ENCODE measurements at regions of chr5 and their contacts with region 1.

Region 1: DNA sequence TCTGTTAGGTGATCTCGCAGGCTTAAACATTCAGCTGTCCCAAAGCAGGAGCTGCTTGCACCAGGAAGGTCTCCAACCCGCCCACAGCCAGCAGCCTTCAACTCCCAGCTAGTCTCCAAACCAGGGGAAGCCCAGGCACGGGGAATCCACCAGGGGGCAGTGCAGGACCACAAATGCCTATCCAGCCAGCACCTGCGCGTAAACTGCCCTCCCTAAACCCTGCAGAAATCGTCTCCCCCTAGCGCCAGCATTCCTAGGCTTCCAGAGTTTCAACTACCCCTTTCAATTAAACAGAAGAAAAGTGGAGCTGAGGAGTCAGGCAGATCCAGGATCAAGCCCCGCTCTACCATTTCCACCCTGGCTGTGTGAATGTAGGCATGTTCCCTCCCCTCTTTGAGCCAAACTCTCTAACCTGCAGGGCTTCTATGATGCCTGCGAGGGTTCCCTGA is 72.0 kb downstream of the HRH2 start:
- DNase-seq: peak; percentile 74
- H3K4me3 ChIP-seq: no peak overlapping the region
- H3K27ac ChIP-seq: no peak overlapping the region
- H3K4me1 ChIP-seq: no peaks in the 10 kb centered on the region
- H3K27me3 ChIP-seq: no peaks in the 10 kb centered on the region
- CTCF ChIP-seq: peak; percentile 94 to 97

Region 2: DNA sequence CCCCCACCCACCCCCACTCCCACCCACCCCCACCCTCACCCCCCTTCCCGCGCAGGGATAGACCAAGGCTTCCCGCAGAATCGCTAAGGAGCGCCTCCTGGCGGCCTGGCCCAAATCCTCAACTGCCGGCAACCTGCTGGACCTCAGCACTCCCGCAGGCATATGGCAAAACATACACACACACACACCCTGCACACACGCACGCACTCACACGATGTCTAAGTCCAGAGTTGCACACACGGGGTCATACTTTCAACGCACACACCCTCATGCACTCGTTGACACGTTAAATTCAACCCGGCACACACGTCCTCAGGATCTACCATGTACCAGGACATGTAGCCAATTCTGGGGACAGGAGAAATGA is 143.2 kb after region 1 on chr5:
- CTCF ChIA-PET with region 1: no interaction called
- dilution Hi-C with region 1: no loop called
- in situ Hi-C with region 1: loop called in 1 of 2 experiments (anchors 25 kb)
- intact Hi-C with region 1: loop called (anchors 10 kb)
- DNase-seq: no peak
- H3K4me3 ChIP-seq: no peak overlapping the region
- H3K27ac ChIP-seq: no peak overlapping the region
- H3K4me1 ChIP-seq: no peaks in the 10 kb centered on the region
- H3K27me3 ChIP-seq: peaks cover 14% of the 10 kb centered on the region
- CTCF ChIP-seq: peak in 1 of 2 donors; percentile 31

Region 3: DNA sequence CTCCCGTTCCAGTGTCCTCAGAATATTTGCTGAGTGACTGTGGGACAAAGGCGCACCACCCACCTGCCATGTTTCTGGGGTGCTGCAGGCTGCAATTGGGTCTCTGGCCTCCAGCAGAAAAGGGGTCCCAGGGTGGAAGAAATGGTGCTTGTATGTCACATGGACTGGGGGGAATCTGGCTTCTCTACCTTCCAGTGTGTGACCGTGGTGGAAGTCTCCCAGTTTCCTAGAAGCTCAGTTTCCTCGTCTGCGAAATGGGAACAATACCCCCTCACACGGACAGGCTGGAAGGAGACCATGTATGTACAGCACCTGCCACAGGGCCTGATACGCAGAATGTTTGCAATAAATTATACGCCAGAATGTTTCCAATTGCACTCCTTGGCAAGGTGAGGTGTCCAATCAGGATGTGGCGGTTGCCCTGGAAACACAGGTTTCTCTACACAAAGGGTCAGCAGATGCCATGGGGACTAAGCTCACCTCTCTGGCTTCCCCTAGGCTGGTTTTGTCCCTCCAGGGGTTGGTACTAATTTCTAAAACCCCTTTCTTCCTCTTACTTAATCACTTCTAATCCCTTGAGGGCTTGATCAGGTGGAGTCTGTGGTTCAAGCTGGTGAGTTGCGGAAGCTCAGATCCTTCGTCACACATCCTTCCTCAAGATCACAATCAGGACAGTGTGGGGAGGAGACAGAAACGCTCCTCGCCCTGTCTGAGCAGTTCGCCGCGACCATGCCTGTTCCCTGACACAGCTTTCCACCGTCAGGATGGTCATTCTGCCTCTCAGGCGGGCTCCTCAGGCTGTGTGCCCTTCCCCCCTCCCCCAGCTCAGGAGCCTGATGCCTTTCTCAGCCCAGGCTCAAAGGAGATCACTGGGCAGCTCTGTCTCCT is 165.6 kb after region 1 on chr5:
- CTCF ChIA-PET with region 1: no interaction called
- dilution Hi-C with region 1: no loop called
- in situ Hi-C with region 1: loop called in 1 of 2 experiments (anchors 25 kb)
- intact Hi-C with region 1: no loop called
- DNase-seq: peak; percentile 83
- H3K4me3 ChIP-seq: no peak overlapping the region
- H3K27ac ChIP-seq: no peak overlapping the region
- H3K4me1 ChIP-seq: peaks cover 9% of the 10 kb centered on the region
- H3K27me3 ChIP-seq: no peaks in the 10 kb centered on the region
- CTCF ChIP-seq: no peak

Region 4: GRCh38 chr5:175902026-175902425 is 172.2 kb after region 1 on chr5:
- CTCF ChIA-PET with region 1: no interaction called
- dilution Hi-C with region 1: no loop called
- in situ Hi-C with region 1: loop called in 1 of 2 experiments (anchors 25 kb)
- intact Hi-C with region 1: loop called (anchors 1 kb)
- DNase-seq: no peak
- H3K4me3 ChIP-seq: no peak overlapping the region
- H3K27ac ChIP-seq: no peak overlapping the region
- H3K4me1 ChIP-seq: no peaks in the 10 kb centered on the region
- H3K27me3 ChIP-seq: no peaks in the 10 kb centered on the region
- CTCF ChIP-seq: no peak

Region 5: DNA sequence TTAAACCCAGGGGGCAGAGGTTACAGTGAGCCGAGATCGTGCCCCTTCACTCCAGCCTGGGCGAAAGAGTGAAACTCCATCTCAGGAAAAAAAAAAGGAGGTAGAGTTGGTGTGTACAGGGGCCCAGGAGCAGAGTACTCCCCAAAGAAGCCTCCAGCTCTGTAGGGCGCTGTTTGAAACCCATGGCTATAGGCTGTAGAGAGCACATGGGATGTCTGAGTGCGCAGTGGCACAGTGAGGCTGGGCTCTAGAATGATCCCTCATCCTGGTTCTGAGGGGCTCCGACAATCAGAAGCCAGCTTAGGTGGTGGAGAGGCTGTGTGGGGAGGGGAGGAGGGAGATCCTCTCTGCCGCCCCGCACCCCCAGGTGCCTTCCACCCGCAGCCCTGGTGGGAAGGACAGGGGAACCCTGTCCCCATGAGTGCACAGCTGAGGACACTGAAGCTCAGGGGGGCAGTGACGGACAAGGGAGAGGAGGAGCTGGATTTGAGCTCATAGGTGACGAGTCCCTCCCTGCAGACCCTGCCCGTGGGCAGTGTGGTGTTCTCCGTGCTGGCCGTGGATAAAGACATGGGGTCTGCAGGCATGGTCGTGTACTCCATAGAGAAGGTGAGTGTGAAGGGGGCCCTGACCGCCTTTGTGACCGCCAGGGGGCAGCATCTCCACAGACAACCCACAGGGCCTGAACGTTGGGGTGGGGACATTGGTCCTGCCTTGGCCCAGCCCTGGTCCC is 843.9 kb after region 1 on chr5:
- CTCF ChIA-PET with region 1: no interaction called
- dilution Hi-C with region 1: loop called (anchors 25 kb)
- in situ Hi-C with region 1: loop called in 1 of 2 experiments (anchors 25 kb)
- intact Hi-C with region 1: loop called (anchors 5 kb)
- DNase-seq: peak; percentile 20
- H3K4me3 ChIP-seq: no peak overlapping the region
- H3K27ac ChIP-seq: no peak overlapping the region
- H3K4me1 ChIP-seq: peaks cover 6% of the 10 kb centered on the region
- H3K27me3 ChIP-seq: no peaks in the 10 kb centered on the region
- CTCF ChIP-seq: peak; percentile 69 to 83

Region 6: GRCh38 chr5:176647030-176647866 is 917.4 kb after region 1 on chr5 and contains the start of gene TSPAN17:
- CTCF ChIA-PET with region 1: no interaction called
- dilution Hi-C with region 1: no loop called
- in situ Hi-C with region 1: no loop called
- intact Hi-C with region 1: loop called (anchors 5 kb)
- DNase-seq: peak; percentile 98
- H3K4me3 ChIP-seq: peak within 1 kb of the TSS; percentile 65 to 72 (median 70)
- H3K27ac ChIP-seq: peak within 1 kb of the TSS; percentile 37
- H3K4me1 ChIP-seq: peaks cover 13% of the 10 kb centered on the region
- H3K27me3 ChIP-seq: no peaks in the 10 kb centered on the region
- CTCF ChIP-seq: peak in 1 of 2 donors; percentile 51
- total RNA-seq, gene TSPAN17: 47.4 to 48.8 TPM

Measured in mammary epithelial cell (primary cell).